ENCODE measurements at regions of chr11 and their contacts with region 1.

Region 1: DNA sequence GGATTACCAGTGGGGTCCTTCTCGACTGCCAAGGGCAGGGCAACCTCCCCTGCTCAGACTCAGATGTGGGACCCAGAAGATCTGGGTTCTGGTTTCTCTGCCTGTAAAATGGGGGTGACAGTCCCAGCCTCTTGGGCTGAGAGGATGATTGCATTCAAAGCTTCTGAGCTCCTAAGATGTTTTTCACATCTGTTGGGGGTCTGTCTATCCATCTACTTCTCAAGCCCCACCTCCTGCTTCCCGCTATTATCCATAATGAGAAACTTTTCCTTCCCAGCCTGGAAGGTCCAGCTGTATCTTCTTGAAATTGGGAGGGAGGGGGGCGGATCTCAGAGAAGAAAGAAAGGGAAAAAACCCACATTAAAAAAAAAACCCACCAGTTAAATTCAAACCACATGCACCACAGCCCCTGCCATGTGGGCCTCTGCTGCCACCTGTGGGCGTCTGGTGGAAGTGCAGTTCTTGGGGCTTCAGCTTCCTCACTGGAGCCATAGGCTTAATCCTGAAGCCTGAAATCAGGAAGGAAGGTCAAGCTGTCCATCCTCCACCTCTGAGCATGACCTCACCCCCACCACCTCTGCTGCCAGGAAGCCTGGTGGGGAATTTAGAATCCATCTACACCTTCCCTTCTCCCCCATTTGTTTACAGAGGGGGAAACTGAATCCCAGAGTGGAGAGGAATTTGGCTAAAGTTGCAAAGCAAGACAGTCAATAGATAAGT is 27.3 kb downstream of the ARHGEF17 start:
- DNase-seq: peak; percentile 81
- ATAC-seq: peak; percentile 72
- H3K4me3 Mint-ChIP-seq: no peak overlapping the region
- H3K27ac Mint-ChIP-seq: no peak overlapping the region
- H3K4me1 Mint-ChIP-seq: peaks cover 2% of the 10 kb centered on the region
- H3K27me3 Mint-ChIP-seq: no peaks in the 10 kb centered on the region

Region 2: GRCh38 chr11:73184953-73185671 is 150.3 kb before region 1 on chr11:
- CTCF ChIA-PET with region 1: interaction called, 11 read pairs
- DNase-seq: peak; percentile 70
- ATAC-seq: peak; percentile 82
- H3K4me3 Mint-ChIP-seq: peak overlapping the region; percentile 4
- H3K27ac Mint-ChIP-seq: no peak overlapping the region
- H3K4me1 Mint-ChIP-seq: peaks cover 6% of the 10 kb centered on the region
- H3K27me3 Mint-ChIP-seq: peaks cover 28% of the 10 kb centered on the region

Region 3: GRCh38 chr11:73218106-73218829 is 117.1 kb before region 1 on chr11 and contains the start of gene P2RY2:
- CTCF ChIA-PET with region 1: no interaction called
- DNase-seq: peak; percentile 50
- ATAC-seq: peak; percentile 79
- H3K4me3 Mint-ChIP-seq: peak within 1 kb of the TSS; percentile 19
- H3K27ac Mint-ChIP-seq: no peak within 1 kb of the TSS
- H3K4me1 Mint-ChIP-seq: peaks cover 3% of the 10 kb centered on the region
- H3K27me3 Mint-ChIP-seq: peaks cover 38% of the 10 kb centered on the region
- total RNA-seq, gene P2RY2: not detected

Region 4: GRCh38 chr11:73244376-73245250 is 90.8 kb before region 1 on chr11:
- CTCF ChIA-PET with region 1: interaction called, 10 read pairs
- DNase-seq: no peak
- ATAC-seq: no peak
- H3K4me3 Mint-ChIP-seq: no peak overlapping the region
- H3K27ac Mint-ChIP-seq: no peak overlapping the region
- H3K4me1 Mint-ChIP-seq: peaks cover 8% of the 10 kb centered on the region
- H3K27me3 Mint-ChIP-seq: peaks cover 5% of the 10 kb centered on the region

Region 5: GRCh38 chr11:73288873-73289707 is 46.3 kb before region 1 on chr11:
- CTCF ChIA-PET with region 1: interaction called, 34 read pairs
- DNase-seq: peak; percentile 68
- ATAC-seq: peak; percentile 77
- H3K4me3 Mint-ChIP-seq: no peak overlapping the region
- H3K27ac Mint-ChIP-seq: no peak overlapping the region
- H3K4me1 Mint-ChIP-seq: peaks cover 29% of the 10 kb centered on the region
- H3K27me3 Mint-ChIP-seq: peaks cover 4% of the 10 kb centered on the region

Region 6: GRCh38 chr11:73295231-73295995 is 40.0 kb before region 1 on chr11:
- CTCF ChIA-PET with region 1: interaction called, 35 read pairs
- DNase-seq: peak; percentile 86
- ATAC-seq: peak; percentile 84
- H3K4me3 Mint-ChIP-seq: no peak overlapping the region
- H3K27ac Mint-ChIP-seq: no peak overlapping the region
- H3K4me1 Mint-ChIP-seq: no peaks in the 10 kb centered on the region
- H3K27me3 Mint-ChIP-seq: no peaks in the 10 kb centered on the region

Region 7: DNA sequence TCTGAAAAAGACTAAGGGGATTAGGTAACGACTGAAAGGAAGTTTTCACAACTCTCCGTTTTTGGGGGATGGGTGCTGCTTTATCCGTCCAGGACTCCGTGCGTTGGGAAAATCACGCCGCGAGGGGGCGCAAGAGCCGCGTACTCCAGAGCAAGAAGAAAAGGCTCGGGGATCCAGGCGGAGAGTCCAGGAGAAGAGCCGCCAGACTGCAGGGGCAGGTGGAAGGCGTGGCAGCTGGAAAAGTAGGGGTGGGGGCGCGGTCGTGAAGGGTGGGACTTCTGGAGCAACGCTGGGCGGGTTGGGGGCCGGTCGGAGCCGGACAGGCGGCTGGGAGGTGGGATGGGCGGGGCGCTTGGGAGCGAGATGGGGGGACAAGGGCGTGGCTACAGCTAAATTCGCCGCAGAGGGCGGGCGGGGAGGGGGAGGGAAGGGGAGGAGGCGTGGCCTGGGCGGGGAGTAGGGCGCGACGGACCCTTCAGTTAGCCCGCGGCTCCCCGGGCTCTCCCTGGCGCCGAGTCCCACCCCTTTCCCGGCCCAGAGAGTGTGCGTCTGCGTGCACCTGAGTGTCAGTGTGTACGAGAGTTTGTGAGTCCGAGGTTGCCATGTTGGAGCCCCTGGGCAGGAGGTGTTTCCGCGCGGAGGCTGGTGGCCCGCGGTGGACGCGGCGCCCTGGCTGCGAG is 27.9 kb before region 1 on chr11:
- CTCF ChIA-PET with region 1: interaction called, 190 read pairs
- DNase-seq: peak; percentile 93
- ATAC-seq: peak; percentile 76
- H3K4me3 Mint-ChIP-seq: peak overlapping the region; percentile 74
- H3K27ac Mint-ChIP-seq: peak overlapping the region; percentile 44
- H3K4me1 Mint-ChIP-seq: peaks cover 6% of the 10 kb centered on the region
- H3K27me3 Mint-ChIP-seq: peaks cover 33% of the 10 kb centered on the region

Region 8: GRCh38 chr11:73325036-73325981 is 10.1 kb before region 1 on chr11:
- CTCF ChIA-PET with region 1: interaction called, 190 read pairs
- DNase-seq: no peak
- ATAC-seq: peak; percentile 28
- H3K4me3 Mint-ChIP-seq: no peak overlapping the region
- H3K27ac Mint-ChIP-seq: no peak overlapping the region
- H3K4me1 Mint-ChIP-seq: peaks cover 19% of the 10 kb centered on the region
- H3K27me3 Mint-ChIP-seq: no peaks in the 10 kb centered on the region

Measured in activated CD8-positive, alpha-beta memory T cell treated with anti-CD3 and anti-CD28 coated beads, Interleukin-2, amount 10 ng/mL, durations not matched to agents 7 days and 5 days (primary cell).